Dorsolateral prefrontal cortex (tissue), 120 donors: ENCODE measurements at regions of chrX and their contacts with region 1.

Region 1: GRCh38 chrX:46912098-46912602 is at the start of gene JADE3:
- DNase-seq: peak in 6 of 10 donors; percentile 23 to 65 (median 54)
- H3K4me3 ChIP-seq: peak within 1 kb of the TSS; percentile 36 to 80 (median 63)
- H3K27ac ChIP-seq: peak within 1 kb of the TSS in 21 of 59 donors; percentile 5 to 67 (median 44)
- H3K27me3 ChIP-seq: peaks cover 0 to 41% (median 5%) of the 10 kb centered on the region in 45 donors
- CTCF ChIP-seq: peak in 1 of 56 donors; percentile 34
- total RNA-seq, gene JADE3: 2.4 to 14.1 (median 5.5) TPM

Region 2: DNA sequence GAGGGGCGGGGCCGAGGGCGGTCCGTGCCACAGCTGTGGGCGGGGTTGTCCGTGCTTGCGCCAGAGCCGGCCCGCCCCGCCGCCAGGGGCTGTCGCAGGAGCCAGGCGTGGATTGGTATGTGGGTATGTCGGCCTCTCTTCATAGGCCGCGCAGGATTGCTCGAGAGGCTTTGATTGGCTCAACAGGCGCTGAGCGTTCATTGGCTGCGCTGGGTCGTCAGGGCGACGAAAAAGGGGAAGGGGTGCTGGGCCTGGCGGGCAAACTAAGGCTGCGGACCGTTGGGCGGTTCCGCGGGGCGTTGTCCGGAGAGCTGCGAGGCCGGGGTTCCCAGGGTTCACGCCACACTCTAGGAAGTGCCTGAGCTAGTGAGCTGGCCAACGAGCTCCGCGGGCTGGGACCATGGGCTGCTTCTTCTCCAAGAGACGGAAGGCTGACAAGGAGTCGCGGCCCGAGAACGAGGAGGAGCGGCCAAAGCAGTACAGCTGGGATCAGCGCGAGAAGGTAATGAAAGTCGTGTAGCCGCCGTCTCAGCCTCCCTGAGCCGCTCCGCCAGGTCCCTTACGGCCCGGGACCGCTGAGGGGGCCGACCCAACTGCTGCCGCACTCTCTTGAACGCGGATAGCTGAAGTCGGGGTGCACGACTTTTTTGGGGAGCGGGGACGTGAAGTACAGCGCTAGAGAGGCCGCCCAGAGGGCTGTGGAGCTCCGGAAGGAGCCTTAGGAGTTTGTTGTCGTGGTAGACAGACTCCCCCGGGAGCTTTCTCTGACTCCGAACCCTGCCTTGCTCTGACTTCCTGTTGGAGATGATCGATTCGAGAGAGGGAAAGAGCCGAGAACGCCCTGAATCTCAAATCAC is 75.2 kb before region 1 on chrX and contains the start of gene RP2:
- intact Hi-C with region 1: loop called in 1 of 2 experiments (anchors 5 kb)
- DNase-seq: peak; percentile 78 to 93 (median 90)
- H3K4me3 ChIP-seq: peak within 1 kb of the TSS; percentile 37 to 87 (median 73)
- H3K27ac ChIP-seq: peak within 1 kb of the TSS in 46 of 59 donors; percentile 6 to 86 (median 56)
- H3K27me3 ChIP-seq: peaks cover 0 to 26% (median 0%) of the 10 kb centered on the region in 45 donors
- CTCF ChIP-seq: peak in 38 of 56 donors; percentile 4 to 52 (median 32)
- total RNA-seq, gene RP2: 2.2 to 5.7 (median 3.4) TPM

Region 3: DNA sequence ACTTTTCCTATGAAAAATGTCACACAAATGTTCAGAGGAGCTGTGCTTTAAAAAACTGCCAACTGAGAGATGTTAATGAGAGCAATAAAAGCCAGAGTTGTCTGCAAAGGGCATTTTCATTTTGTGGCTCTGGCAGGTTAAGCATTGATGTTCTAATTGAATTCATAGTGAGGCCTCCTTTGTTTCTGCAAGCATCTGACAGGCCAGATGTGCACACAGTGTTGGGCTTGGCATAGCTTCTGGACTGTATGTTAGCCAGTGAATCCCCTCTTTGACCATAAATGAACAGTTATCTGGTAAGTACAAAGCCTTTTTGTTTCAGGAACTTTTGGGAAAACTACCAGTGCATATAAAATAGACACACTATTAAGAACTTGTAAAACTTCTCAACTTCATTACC is 81.9 kb after region 1 on chrX:
- intact Hi-C with region 1: loop called in 1 of 2 experiments (anchors 10 kb)
- DNase-seq: peak in 2 of 10 donors; percentile 62 to 68
- H3K4me3 ChIP-seq: no peak overlapping the region
- H3K27ac ChIP-seq: peak overlapping the region in 41 of 59 donors; percentile 3 to 82 (median 57)
- H3K27me3 ChIP-seq: peaks cover 0 to 72% (median 11%) of the 10 kb centered on the region in 45 donors
- CTCF ChIP-seq: peak in 2 of 56 donors; percentile 13 to 33